Activated CD4-positive, alpha-beta memory T cell treated with anti-CD3 and anti-CD28 coated beads for 36 hours (primary cell): ENCODE measurements at regions of chr16 and their contacts with region 1.

Region 1: DNA sequence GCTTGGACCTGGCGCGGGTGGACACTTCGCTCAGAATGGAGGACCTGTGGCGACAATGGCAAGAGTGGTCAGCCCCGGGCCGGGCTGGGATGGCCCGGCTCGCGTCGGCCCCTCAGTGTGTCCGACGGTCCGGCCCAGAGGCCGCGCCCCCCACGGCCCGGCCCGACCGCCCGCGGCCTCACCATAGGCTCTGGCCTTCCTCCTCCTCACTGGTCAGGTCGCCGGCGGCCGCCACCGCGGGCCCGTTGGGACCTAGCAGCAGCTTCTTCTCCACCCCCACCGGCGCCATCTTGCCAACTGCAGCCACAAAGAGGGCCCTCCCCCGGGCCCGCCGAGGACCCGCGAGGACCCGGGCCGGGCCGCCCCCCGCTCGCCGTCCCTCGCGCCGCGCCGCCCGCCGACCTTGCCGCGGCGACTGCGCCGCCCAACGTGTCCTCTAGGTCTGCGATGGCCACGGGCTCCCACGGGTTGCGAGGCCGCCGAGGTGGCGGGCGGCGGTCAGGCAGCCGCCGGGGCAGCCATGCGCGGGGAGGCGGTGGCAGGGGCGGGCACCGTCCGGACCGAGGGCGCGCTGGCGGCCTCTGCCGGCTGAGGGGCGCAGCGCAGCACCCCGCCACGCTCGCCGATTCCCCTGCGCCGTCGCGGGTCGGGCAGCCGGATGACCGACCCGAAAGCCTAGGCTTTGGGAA is at the start of gene DYNC1LI2:
- DNase-seq: peak; percentile 84
- H3K4me3 Mint-ChIP-seq: peak within 1 kb of the TSS; percentile 83
- H3K27ac Mint-ChIP-seq: peak within 1 kb of the TSS; percentile 74
- H3K4me1 Mint-ChIP-seq: peaks cover 37% of the 10 kb centered on the region
- H3K27me3 Mint-ChIP-seq: peaks cover 4% of the 10 kb centered on the region
- total RNA-seq, gene DYNC1LI2: 37.9 to 39.1 TPM

Region 2: GRCh38 chr16:66399031-66399430 is 352.4 kb before region 1 on chr16:
- CTCF ChIA-PET with region 1: no interaction called
- POLR2A ChIA-PET with region 1: no interaction called
- intact Hi-C with region 1: no loop called
- DNase-seq: no peak
- H3K4me3 Mint-ChIP-seq: no peak overlapping the region
- H3K27ac Mint-ChIP-seq: no peak overlapping the region
- H3K4me1 Mint-ChIP-seq: no peaks in the 10 kb centered on the region
- H3K27me3 Mint-ChIP-seq: peaks cover 4% of the 10 kb centered on the region

Region 3: GRCh38 chr16:66562407-66562806 is 189.0 kb before region 1 on chr16:
- CTCF ChIA-PET with region 1: interaction called, 4 read pairs
- POLR2A ChIA-PET with region 1: no interaction called
- intact Hi-C with region 1: loop called (anchors 5 kb)
- DNase-seq: no peak
- H3K4me3 Mint-ChIP-seq: no peak overlapping the region
- H3K27ac Mint-ChIP-seq: no peak overlapping the region
- H3K4me1 Mint-ChIP-seq: peaks cover 71% of the 10 kb centered on the region
- H3K27me3 Mint-ChIP-seq: no peaks in the 10 kb centered on the region

Region 4: GRCh38 chr16:66650707-66651473 is 100.6 kb before region 1 on chr16:
- CTCF ChIA-PET with region 1: interaction called, 12 read pairs
- POLR2A ChIA-PET with region 1: no interaction called
- intact Hi-C with region 1: no loop called
- DNase-seq: peak; percentile 86
- H3K4me3 Mint-ChIP-seq: peak overlapping the region; percentile 58
- H3K27ac Mint-ChIP-seq: no peak overlapping the region
- H3K4me1 Mint-ChIP-seq: peaks cover 10% of the 10 kb centered on the region
- H3K27me3 Mint-ChIP-seq: peaks cover 5% of the 10 kb centered on the region

Region 5: GRCh38 chr16:66696669-66697630 is 54.5 kb before region 1 on chr16 and contains the start of gene CMTM4:
- CTCF ChIA-PET with region 1: interaction called, 5 read pairs
- POLR2A ChIA-PET with region 1: no interaction called
- intact Hi-C with region 1: loop called (anchors 5 kb)
- DNase-seq: peak; percentile 79
- H3K4me3 Mint-ChIP-seq: peak within 1 kb of the TSS; percentile 74
- H3K27ac Mint-ChIP-seq: no peak within 1 kb of the TSS
- H3K4me1 Mint-ChIP-seq: no peaks in the 10 kb centered on the region
- H3K27me3 Mint-ChIP-seq: peaks cover 4% of the 10 kb centered on the region
- total RNA-seq, gene CMTM4: 2.8 to 4.1 TPM

Region 6: GRCh38 chr16:66717112-66717675 is 34.3 kb before region 1 on chr16:
- CTCF ChIA-PET with region 1: no interaction called
- POLR2A ChIA-PET with region 1: no interaction called
- intact Hi-C with region 1: no loop called
- DNase-seq: peak; percentile 29
- H3K4me3 Mint-ChIP-seq: no peak overlapping the region
- H3K27ac Mint-ChIP-seq: no peak overlapping the region
- H3K4me1 Mint-ChIP-seq: no peaks in the 10 kb centered on the region
- H3K27me3 Mint-ChIP-seq: no peaks in the 10 kb centered on the region